ENCODE measurements at regions of chr2 and their contacts with region 1.

Region 1: DNA sequence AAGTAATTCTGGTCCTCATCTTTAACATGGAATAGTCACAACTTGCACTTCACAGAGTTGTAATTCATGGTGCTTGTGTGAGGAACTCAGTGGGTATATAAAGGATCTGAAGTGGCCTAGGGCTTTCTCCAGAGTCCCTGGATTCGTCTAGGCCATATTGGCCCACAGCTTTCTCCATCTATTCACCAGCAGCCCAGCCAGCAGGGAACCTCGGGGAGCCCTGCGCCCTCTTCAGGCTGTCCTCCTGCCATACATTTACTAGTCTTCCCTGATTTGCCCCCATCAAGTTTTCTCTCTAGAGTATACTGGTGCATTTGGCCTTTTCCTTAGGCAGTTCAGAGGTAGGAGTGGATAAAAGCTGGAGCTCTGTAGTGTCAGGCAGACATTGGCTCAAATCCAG is 278.3 kb downstream of the MYCN start:
- DNase-seq: peak; percentile 33
- ATAC-seq: peak; percentile 94
- H3K4me3 ChIP-seq: no peak overlapping the region
- H3K27ac ChIP-seq: no peak overlapping the region
- H3K4me1 ChIP-seq: no peaks in the 10 kb centered on the region
- H3K27me3 ChIP-seq: peaks cover 0 to 17% of the 10 kb centered on the region in 2 experiments; a peak in 3 of 5 replicates
- CTCF ChIP-seq: peak; percentile 75
- EP300 ChIP-seq: no peak
- POLR2A ChIP-seq: no peak
- RAD21 ChIP-seq: peak; percentile 78

Region 2: DNA sequence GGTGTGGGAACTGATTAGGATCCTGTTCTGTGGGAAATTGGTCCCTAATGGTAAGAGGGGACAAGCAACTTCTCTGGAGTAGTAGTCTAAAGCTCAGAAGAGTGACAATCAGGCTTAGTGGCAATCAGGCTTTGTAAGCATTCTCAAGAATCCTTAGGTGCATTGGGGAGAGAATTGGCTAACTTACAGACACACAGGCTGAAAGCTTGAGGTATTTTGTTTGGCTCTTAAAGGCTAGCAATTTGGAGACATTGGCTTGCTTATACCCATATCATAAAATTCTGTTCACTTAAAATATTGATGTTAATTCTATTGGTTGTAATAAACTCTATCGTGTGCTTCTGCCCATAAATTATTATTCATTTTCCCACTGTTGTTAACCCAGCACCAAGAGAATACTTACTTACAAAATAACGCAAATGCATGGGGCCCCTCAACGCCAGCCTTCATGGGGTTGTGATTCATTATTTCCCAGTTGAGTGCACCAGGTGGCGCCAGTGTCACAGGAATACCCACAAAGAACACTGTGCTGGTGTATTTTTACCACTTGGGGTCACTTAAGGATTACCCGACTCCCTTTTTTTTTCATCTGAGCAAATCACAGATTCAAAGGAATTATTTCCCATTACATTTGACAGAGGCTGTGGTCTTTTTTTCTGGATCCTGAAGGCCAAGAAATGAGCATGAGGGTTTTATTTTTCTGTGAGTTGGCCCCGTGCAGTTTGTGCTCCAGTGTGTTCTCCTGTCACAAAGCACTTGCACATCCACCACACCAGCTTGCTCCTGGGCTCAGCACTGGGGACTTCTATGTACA is 581.4 kb before region 1 on chr2:
- CTCF ChIA-PET with region 1: interaction called, 3 read pairs
- POLR2A ChIA-PET with region 1: no interaction called
- in situ Hi-C with region 1: no loop called
- intact Hi-C with region 1: loop called (anchors 2 kb)
- DNase-seq: peak; percentile 71
- ATAC-seq: peak; percentile 84
- H3K4me3 ChIP-seq: no peak overlapping the region
- H3K27ac ChIP-seq: peak overlapping the region; percentile 2
- H3K4me1 ChIP-seq: peaks cover 37% of the 10 kb centered on the region
- H3K27me3 ChIP-seq: no peaks in the 10 kb centered on the region
- CTCF ChIP-seq: peak; percentile 91
- EP300 ChIP-seq: no peak
- POLR2A ChIP-seq: no peak
- RAD21 ChIP-seq: peak; percentile 94

Region 3: GRCh38 chr2:16034151-16034973 is 184.3 kb before region 1 on chr2:
- CTCF ChIA-PET with region 1: no interaction called
- POLR2A ChIA-PET with region 1: no interaction called
- in situ Hi-C with region 1: no loop called
- intact Hi-C with region 1: loop called (anchors 10 kb)
- DNase-seq: peak; percentile 40
- ATAC-seq: peak; percentile 94
- H3K4me3 ChIP-seq: no peak overlapping the region
- H3K27ac ChIP-seq: no peak overlapping the region
- H3K4me1 ChIP-seq: peaks cover 20% of the 10 kb centered on the region
- H3K27me3 ChIP-seq: peaks cover 0 to 32% of the 10 kb centered on the region in 2 experiments; a peak in 4 of 5 replicates
- CTCF ChIP-seq: peak; percentile 57
- EP300 ChIP-seq: no peak
- POLR2A ChIP-seq: no peak
- RAD21 ChIP-seq: no peak

Region 4: DNA sequence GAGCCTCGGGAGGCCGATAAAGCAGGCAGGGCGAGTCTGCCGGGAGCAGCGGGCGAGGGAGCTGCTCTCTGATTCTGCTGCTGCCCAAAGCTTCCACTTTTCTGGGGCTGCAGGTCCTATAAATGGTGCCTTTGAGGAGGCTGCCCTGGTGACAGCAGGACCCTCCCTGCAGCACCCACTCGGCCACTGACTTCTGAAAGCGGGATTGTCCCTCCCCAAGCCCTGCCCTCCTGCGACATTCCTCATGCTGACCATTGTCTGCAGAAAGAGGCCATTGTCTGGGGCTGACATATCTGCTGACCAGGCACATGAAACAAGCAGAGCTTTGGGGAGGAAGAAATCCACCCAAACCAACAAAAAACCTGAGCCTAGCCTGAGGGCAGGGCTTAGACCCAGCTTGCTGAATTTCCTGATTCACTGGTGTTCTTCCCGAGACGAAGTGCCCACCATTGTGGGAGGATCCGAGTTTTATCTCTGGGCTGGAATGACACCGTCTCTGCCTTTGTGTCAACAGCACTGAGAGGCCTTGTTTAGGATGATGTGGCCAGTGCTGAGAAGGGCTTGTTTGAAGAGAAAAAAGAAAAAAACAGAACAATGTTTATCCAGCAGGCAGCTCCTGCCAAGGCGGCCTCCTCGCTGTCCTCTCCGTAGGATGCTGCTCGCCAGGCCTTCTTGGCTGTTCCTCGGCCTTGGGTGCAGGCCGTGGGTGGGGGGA is 148.5 kb before region 1 on chr2:
- CTCF ChIA-PET with region 1: interaction called, 3 read pairs
- POLR2A ChIA-PET with region 1: no interaction called
- in situ Hi-C with region 1: no loop called
- intact Hi-C with region 1: loop called (anchors 10 kb)
- DNase-seq: peak; percentile 91
- ATAC-seq: peak; percentile 77
- H3K4me3 ChIP-seq: peak overlapping the region; percentile 33 to 66 (median 35)
- H3K27ac ChIP-seq: peak overlapping the region; percentile 75
- H3K4me1 ChIP-seq: peaks cover 66% of the 10 kb centered on the region
- H3K27me3 ChIP-seq: no peaks in the 10 kb centered on the region
- CTCF ChIP-seq: no peak
- EP300 ChIP-seq: peak in 1 of 2 experiments; percentile 76; a peak in 3 of 4 replicates
- POLR2A ChIP-seq: peak in 1 of 2 experiments; percentile 59; a peak in 3 of 4 replicates
- RAD21 ChIP-seq: no peak

Region 5: DNA sequence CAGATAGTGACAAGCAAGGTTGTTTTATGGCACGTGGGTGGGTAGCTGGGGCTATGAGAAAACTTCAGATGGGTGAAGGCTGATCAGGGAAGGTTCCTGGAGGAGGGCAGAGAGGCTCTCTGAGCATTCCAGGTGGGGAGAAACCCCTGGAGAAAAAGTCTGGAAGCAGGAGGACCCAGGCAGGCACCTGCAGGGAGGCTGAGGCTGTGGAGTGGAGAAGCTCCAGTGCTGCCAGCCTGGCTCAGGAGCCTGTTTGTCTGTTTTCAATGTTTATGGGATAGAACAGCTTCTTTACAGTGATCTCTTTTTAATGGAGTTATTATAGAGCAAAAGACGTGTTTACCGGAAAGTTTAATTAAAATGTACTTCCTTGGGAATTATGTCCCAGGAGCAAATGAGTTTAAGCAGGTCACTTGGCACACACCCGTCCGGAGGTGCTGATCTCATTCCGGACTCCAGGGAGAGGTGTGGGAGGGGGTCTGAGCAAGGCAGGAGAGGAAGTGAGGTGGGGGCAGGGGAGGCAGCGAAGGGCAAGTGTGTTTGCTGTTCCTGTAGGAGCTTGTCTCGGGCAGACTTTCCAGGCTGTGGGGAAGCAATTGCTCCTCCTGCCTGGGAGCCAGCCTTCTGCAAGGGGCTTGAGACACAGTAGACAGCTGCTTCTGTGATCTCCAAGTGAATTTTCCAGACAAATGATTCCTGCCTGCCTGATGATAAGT is 38.8 kb before region 1 on chr2:
- CTCF ChIA-PET with region 1: no interaction called
- POLR2A ChIA-PET with region 1: no interaction called
- in situ Hi-C with region 1: no loop called
- intact Hi-C with region 1: no loop called
- DNase-seq: no peak
- ATAC-seq: no peak
- H3K4me3 ChIP-seq: no peak overlapping the region
- H3K27ac ChIP-seq: no peak overlapping the region
- H3K4me1 ChIP-seq: no peaks in the 10 kb centered on the region
- H3K27me3 ChIP-seq: peaks cover 3 to 23% of the 10 kb centered on the region in 2 experiments; a peak in 3 of 5 replicates
- CTCF ChIP-seq: no peak
- EP300 ChIP-seq: no peak
- POLR2A ChIP-seq: no peak
- RAD21 ChIP-seq: no peak

Region 6: GRCh38 chr2:16487686-16488085 is 269.1 kb after region 1 on chr2:
- CTCF ChIA-PET with region 1: interaction called, 3 read pairs
- POLR2A ChIA-PET with region 1: no interaction called
- in situ Hi-C with region 1: no loop called
- intact Hi-C with region 1: loop called (anchors 1 kb)
- DNase-seq: peak; percentile 34
- ATAC-seq: no peak
- H3K4me3 ChIP-seq: no peak overlapping the region
- H3K27ac ChIP-seq: no peak overlapping the region
- H3K4me1 ChIP-seq: no peaks in the 10 kb centered on the region
- H3K27me3 ChIP-seq: no peaks in the 10 kb centered on the region; a peak in 1 of 5 replicates
- CTCF ChIP-seq: peak; percentile 71
- EP300 ChIP-seq: no peak
- POLR2A ChIP-seq: no peak
- RAD21 ChIP-seq: no peak

Region 7: GRCh38 chr2:16493792-16494191 is 275.2 kb after region 1 on chr2:
- CTCF ChIA-PET with region 1: no interaction called
- POLR2A ChIA-PET with region 1: no interaction called
- in situ Hi-C with region 1: no loop called
- intact Hi-C with region 1: loop called (anchors 1 kb)
- DNase-seq: no peak
- ATAC-seq: no peak
- H3K4me3 ChIP-seq: no peak overlapping the region
- H3K27ac ChIP-seq: no peak overlapping the region
- H3K4me1 ChIP-seq: no peaks in the 10 kb centered on the region
- H3K27me3 ChIP-seq: no peaks in the 10 kb centered on the region
- CTCF ChIP-seq: no peak
- EP300 ChIP-seq: no peak
- POLR2A ChIP-seq: no peak
- RAD21 ChIP-seq: no peak

Region 8: GRCh38 chr2:16745466-16745865 is 526.8 kb after region 1 on chr2:
- CTCF ChIA-PET with region 1: no interaction called
- POLR2A ChIA-PET with region 1: no interaction called
- in situ Hi-C with region 1: no loop called
- intact Hi-C with region 1: no loop called
- DNase-seq: no peak
- ATAC-seq: no peak
- H3K4me3 ChIP-seq: no peak overlapping the region
- H3K27ac ChIP-seq: no peak overlapping the region
- H3K4me1 ChIP-seq: no peaks in the 10 kb centered on the region
- H3K27me3 ChIP-seq: no peaks in the 10 kb centered on the region
- CTCF ChIP-seq: no peak
- EP300 ChIP-seq: no peak
- POLR2A ChIP-seq: no peak
- RAD21 ChIP-seq: no peak